Activated T-helper 1 cell treated with anti-CD3 and anti-CD28 coated beads, Interleukin-12 subunit alpha, Interleukin-12 subunit beta, Interleukin-2, Interleukin-4 antibody, amounts not matched to agents 30 ng/mL and 10 ng/mL and 1 ng/mL, durations not matched to agents 14 hours and 24 hours and 36 hours (primary cell): ENCODE measurements at regions of chrX and their contacts with region 1.

Region 1: GRCh38 chrX:134377537-134377936 is 82.4 kb upstream of the HPRT1 start:
- DNase-seq: no peak
- H3K4me3 Mint-ChIP-seq: peak overlapping the region; percentile 11
- H3K27ac Mint-ChIP-seq: no peak overlapping the region
- H3K4me1 Mint-ChIP-seq: peaks cover 20% of the 10 kb centered on the region
- H3K27me3 Mint-ChIP-seq: no peaks in the 10 kb centered on the region

Region 2: GRCh38 chrX:134431894-134432293 is 54.4 kb after region 1 on chrX:
- intact Hi-C with region 1: loop called (anchors 5 kb)
- DNase-seq: no peak
- H3K4me3 Mint-ChIP-seq: no peak overlapping the region
- H3K27ac Mint-ChIP-seq: no peak overlapping the region
- H3K4me1 Mint-ChIP-seq: no peaks in the 10 kb centered on the region
- H3K27me3 Mint-ChIP-seq: no peaks in the 10 kb centered on the region

Region 3: DNA sequence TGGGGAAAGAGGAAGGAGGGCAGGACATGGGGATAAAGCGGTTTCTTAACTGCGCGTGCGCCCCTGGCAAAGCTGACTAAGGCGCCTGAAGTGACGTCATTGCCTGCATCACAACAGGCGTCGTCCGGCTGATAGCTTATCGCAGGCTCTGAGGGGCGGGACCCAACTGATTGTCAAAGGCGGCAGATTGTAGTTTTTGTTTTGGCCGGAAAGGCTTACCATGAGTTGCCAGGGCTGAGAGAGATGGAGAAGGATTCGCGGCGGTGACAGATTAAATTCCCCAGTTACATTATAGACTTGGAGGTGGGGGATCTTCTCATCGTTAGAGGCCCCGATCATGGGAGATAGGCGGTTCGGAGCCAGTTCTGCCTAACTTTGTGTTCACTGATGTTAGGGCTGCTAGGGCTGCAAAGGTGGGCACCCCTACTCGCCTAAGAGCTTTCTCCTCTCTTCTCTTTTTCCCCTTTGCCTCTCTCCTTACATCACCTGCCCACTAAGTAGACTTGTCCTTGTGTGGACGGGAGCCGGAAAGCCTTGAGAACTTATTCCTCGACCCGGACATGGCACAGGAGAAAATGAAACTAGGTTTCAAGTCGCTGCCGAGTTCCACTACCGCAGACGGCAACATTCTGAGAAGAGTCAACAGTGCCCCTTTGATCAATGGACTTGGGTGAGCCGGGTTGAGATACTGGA is 429.6 kb after region 1 on chrX:
- intact Hi-C with region 1: loop called (anchors 2 kb)
- DNase-seq: peak; percentile 83
- H3K4me3 Mint-ChIP-seq: peak overlapping the region; percentile 96
- H3K27ac Mint-ChIP-seq: peak overlapping the region; percentile 100
- H3K4me1 Mint-ChIP-seq: peaks cover 25% of the 10 kb centered on the region
- H3K27me3 Mint-ChIP-seq: no peaks in the 10 kb centered on the region